Mammary epithelial cell (primary cell): ENCODE measurements at regions of chr15 and their contacts with region 1.

Region 1: DNA sequence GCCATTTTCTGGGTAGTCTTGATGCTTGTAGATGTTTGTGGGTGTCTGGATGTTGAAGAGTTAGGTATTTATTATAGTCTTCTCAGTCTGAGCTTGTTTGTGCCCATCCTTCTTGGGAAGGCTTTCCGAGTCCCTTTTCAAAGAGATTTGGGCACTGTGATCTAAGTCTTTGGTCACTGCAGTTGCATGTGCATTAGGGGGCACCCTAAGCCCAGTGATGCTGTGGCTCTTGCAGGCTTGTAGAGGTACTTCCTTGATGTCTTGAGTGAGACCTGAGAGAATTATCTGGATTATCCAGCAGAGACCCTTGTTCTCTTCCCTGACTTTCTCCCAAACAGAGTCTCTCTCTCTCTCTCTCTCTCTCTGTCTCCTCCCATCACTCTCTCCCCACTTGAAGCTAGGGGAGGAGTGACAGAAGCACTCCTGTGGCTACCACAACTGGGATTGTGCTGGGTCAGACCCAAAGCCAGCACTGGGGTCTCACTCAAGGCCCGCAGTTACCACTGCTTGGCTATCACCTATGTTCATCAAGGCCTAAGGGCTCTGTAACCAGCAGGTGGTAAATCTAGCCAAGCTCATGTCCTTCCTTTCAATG is 68.5 kb downstream of the TMCO5A start:
- DNase-seq: peak; percentile 62
- H3K4me3 ChIP-seq: no peak overlapping the region
- H3K27ac ChIP-seq: no peak overlapping the region
- H3K4me1 ChIP-seq: no peaks in the 10 kb centered on the region
- H3K27me3 ChIP-seq: no peaks in the 10 kb centered on the region
- CTCF ChIP-seq: peak; percentile 74 to 88

Region 2: DNA sequence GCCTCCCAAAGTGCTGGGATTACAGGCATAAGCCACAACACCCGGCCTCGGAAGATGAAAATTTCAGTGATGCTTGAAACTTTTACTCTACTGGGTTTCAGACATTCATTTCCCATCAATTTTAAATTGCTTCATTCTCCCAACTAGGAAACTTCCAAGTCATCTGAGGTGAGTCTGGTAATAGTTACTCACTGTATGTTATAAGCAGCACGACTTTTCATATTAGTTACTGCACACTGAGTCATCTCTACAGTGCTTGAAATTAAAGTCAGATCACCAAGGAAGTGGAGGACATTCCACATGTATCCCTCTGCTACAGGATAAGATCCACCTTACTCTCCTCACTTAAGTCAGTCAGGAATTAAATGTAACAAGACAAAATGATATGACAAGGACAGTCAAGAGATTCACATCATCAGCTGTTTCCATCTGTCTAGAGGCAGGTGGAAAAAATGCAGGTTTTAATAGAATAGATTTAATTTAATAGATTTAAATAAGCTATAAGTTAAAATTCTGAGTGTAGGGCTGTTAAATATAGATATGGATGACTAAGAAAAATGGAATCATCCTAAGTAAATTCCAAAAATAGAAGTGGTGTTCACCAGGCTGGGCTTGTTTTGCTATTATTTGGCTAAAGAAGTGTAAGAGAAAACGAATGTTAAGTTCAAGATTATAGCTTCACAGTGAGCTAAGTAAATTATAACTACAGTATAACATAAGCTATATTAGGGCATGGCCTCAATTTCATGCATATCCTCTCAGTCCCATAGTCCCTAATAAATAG is 35.9 kb after region 1 on chr15:
- CTCF ChIA-PET with region 1: no interaction called
- dilution Hi-C with region 1: no loop called
- in situ Hi-C with region 1: no loop called
- intact Hi-C with region 1: no loop called
- DNase-seq: peak; percentile 80
- H3K4me3 ChIP-seq: no peak overlapping the region
- H3K27ac ChIP-seq: peak overlapping the region; percentile 62
- H3K4me1 ChIP-seq: peaks cover 62% of the 10 kb centered on the region
- H3K27me3 ChIP-seq: no peaks in the 10 kb centered on the region
- CTCF ChIP-seq: no peak

Region 3: DNA sequence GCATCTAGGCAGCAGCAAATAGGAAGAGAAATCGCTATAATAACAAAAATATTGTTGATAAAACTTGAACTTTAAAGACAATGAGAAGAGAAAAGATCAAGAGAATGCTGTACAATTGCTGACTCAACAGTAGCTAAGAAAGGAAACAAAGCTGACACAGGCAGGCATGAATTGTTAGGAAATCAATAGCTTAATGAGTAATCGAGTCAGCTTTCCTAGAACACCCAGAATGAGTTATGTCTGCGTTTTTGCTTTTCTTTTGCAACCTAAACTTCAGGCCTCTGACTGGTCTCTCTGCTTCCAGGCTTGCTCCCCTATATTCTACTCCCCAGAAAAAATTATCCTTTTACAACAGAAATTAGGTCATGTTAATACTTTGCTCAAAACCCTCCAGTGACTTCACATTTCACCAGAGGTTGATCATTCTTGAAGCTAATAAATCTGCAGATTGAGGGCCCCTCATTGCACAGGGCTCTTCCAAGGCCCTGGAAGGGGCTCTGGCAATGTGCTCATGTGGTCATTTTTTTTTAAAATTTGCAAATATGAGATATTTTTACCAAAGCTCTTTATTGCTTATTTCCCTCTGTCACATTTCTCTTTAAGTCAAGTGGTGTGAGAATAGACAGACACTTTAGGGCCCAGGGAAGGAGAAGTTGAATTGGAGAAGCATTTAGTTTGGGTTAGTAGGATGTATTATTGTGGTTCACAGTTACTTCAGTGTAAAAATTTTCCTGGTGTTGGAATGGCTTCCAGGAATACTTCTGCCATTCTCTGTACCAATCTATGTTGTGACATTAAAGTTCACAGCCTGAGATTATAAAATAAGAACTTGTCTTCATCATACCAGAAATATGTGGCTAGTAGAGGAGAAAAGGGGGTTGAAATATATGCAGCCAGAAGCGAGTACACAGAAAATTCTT is 47.8 kb after region 1 on chr15:
- CTCF ChIA-PET with region 1: no interaction called
- dilution Hi-C with region 1: loop called (anchors 5 kb)
- in situ Hi-C with region 1: no loop called
- intact Hi-C with region 1: no loop called
- DNase-seq: peak; percentile 80
- H3K4me3 ChIP-seq: no peak overlapping the region
- H3K27ac ChIP-seq: no peak overlapping the region
- H3K4me1 ChIP-seq: peaks cover 14% of the 10 kb centered on the region
- H3K27me3 ChIP-seq: no peaks in the 10 kb centered on the region
- CTCF ChIP-seq: no peak

Region 4: DNA sequence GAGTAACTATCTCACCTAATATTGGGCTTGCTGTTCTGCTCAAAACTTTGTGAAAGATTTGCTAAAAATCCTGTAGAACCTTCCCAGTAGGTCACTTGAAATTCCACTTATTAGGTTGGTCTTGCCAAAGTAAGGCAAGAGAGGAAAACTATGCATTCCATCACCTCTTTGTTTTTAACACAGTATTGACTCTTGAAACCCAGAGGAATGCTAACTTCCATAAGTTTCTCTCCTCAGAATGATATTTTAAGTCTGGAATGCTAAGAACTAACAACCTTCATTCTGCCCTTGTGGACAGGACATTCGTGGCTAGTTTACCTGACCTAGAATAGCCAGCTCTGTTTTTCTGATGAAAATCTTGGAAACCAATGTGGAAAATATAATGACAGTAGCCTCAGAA is 86.0 kb after region 1 on chr15:
- CTCF ChIA-PET with region 1: no interaction called
- dilution Hi-C with region 1: no loop called
- in situ Hi-C with region 1: no loop called
- intact Hi-C with region 1: no loop called
- DNase-seq: no peak
- H3K4me3 ChIP-seq: no peak overlapping the region
- H3K27ac ChIP-seq: no peak overlapping the region
- H3K4me1 ChIP-seq: peaks cover 8% of the 10 kb centered on the region
- H3K27me3 ChIP-seq: no peaks in the 10 kb centered on the region
- CTCF ChIP-seq: no peak

Region 5: GRCh38 chr15:38354315-38354929 is 351.4 kb after region 1 on chr15:
- CTCF ChIA-PET with region 1: no interaction called
- dilution Hi-C with region 1: loop called (anchors 25 kb)
- in situ Hi-C with region 1: loop called in 1 of 2 experiments (anchors 5 kb)
- intact Hi-C with region 1: loop called (anchors 1 kb)
- DNase-seq: peak; percentile 34
- H3K4me3 ChIP-seq: no peak overlapping the region
- H3K27ac ChIP-seq: no peak overlapping the region
- H3K4me1 ChIP-seq: no peaks in the 10 kb centered on the region
- H3K27me3 ChIP-seq: no peaks in the 10 kb centered on the region
- CTCF ChIP-seq: peak; percentile 76 to 83

Region 6: GRCh38 chr15:38414357-38414756 is 411.4 kb after region 1 on chr15:
- CTCF ChIA-PET with region 1: no interaction called
- dilution Hi-C with region 1: no loop called
- in situ Hi-C with region 1: no loop called
- intact Hi-C with region 1: loop called (anchors 1 kb)
- DNase-seq: peak; percentile 53
- H3K4me3 ChIP-seq: no peak overlapping the region
- H3K27ac ChIP-seq: no peak overlapping the region
- H3K4me1 ChIP-seq: no peaks in the 10 kb centered on the region
- H3K27me3 ChIP-seq: peaks cover 9% of the 10 kb centered on the region
- CTCF ChIP-seq: peak; percentile 80

Region 7: DNA sequence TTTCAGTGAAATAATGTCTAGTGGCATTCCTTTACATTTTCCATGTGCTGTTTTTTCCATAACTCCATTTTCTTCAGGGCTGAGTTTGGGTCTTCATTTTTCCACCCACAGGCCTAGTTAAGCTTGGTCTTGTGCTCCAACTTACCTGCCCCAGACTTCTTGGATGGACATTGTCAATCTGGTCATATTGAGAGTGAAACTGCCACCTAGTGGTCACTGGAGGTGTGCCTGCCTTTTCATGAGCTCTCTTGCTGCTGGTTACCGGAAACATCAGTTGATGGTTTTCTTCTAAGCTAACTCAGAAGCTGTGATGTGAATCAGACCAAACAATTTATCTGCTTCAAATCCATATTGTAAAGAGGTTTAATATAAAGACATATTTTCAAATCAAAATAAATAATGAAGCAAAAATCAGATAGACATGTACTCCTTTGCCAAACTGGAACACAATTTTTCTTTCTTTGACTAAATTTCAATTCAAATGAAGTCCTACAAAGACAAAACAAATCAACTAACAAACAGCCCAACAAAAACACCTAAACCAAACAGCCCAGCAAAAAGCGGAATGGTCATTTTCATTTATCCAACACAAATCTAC is 696.8 kb after region 1 on chr15:
- CTCF ChIA-PET with region 1: no interaction called
- dilution Hi-C with region 1: no loop called
- in situ Hi-C with region 1: loop called in 1 of 2 experiments (anchors 10 kb)
- intact Hi-C with region 1: no loop called
- DNase-seq: peak; percentile 45
- H3K4me3 ChIP-seq: no peak overlapping the region
- H3K27ac ChIP-seq: no peak overlapping the region
- H3K4me1 ChIP-seq: peaks cover 6% of the 10 kb centered on the region
- H3K27me3 ChIP-seq: no peaks in the 10 kb centered on the region
- CTCF ChIP-seq: peak; percentile 91 to 94